ENCODE measurements at regions of chr9 and their contacts with region 1.

Region 1: GRCh38 chr9:129413537-129414376 is 207.1 kb downstream of the C9orf50 start:
- DNase-seq: peak; percentile 99
- H3K4me3 Mint-ChIP-seq: peak overlapping the region; percentile 82
- H3K27ac Mint-ChIP-seq: peak overlapping the region; percentile 93
- H3K4me1 Mint-ChIP-seq: peaks cover 14% of the 10 kb centered on the region
- H3K27me3 Mint-ChIP-seq: no peaks in the 10 kb centered on the region

Region 2: DNA sequence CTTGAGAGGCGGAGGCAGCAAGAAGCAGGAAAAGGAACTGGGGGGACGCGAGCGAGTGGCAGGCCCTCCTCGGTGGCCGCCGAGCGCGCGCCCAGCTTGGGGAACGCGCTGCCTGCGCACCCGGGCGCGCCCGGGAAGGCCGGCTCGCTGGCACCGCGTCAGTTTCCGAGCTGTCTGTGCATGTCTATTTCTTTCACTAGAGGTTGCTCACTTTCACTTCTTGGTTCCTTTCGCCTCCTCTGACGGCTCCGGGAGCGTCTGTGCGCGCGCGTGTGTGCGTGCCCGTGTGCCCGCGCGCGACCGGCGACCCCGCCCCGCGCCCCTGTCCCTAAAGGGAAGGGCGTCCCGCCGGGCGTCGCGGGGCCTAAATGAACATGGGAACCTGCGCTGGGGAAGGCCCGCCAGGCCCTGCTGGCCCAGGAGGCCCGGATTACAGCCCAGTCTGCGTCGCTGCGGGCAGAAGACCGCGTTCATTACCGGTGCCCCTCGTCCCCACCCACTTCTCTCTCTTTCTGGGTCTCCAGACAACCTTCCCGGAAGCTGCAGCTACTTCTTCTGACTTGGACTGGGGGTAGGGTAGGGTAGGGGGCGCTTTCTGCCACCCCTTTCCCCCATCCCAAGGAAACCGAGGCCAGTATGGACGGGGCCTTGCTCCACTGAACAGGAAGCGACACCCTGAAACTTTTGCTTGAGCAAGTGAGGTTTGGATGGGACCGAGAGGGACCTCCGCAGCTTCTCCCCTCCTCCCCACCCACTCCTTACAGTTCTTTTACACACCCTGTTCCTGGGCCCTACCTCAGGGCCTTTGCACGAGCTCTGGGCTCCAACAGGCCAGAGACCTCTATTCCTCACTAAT is 30.0 kb before region 1 on chr9:
- CTCF ChIA-PET with region 1: no interaction called
- intact Hi-C with region 1: loop called (anchors 1 kb)
- DNase-seq: peak; percentile 80
- H3K4me3 Mint-ChIP-seq: peak overlapping the region; percentile 69
- H3K27ac Mint-ChIP-seq: peak overlapping the region; percentile 66
- H3K4me1 Mint-ChIP-seq: peaks cover 10% of the 10 kb centered on the region
- H3K27me3 Mint-ChIP-seq: no peaks in the 10 kb centered on the region

Region 3: DNA sequence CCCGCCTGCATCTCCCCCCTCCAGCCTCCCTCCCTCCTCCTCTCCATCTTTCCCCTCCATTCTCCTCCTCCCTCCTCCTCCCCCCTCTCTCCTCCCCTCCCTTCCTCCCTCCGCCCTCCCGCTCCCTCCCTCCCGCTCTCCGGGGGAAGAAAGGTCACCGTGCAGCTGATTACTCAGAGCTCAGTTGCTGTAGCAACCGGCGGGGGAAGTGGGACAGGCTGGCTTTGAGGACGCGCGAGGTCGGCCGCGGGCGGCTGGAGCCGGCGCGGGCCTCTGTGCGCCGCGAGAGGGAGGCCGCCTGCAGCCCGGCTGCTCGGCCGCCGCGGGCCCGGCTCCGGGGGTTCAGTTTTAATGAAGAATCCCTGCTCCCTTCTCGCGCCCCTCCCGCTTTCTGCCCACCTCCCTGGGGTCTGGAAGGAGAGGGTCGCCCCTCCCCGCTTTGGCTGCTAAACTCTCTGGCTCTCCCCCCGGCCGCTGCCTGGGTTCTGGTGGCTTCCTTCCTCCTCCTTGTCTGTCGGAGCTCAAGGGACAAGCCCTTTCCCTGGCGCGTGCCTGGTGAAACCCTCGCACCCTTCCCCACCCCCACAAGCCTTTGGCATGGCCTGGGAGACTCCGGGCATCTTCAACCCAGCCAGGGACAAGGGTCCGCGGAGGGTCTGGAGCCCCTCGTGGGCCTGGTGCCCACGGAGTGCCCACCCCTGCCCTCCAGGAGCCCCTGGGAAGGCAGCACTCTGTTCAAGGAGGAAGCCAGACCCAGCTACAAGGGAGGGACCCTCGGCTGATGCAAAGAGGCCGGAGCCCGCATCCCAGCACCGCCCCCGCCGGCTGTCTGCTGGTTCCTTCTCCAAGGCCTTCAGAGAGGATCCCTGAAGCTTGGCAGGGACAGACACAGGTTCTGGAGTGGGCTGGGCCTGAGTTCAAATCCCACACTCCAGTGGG is 46.8 kb after region 1 on chr9:
- CTCF ChIA-PET with region 1: no interaction called
- intact Hi-C with region 1: loop called (anchors 1 kb)
- DNase-seq: peak; percentile 97
- H3K4me3 Mint-ChIP-seq: peak overlapping the region; percentile 78
- H3K27ac Mint-ChIP-seq: peak overlapping the region; percentile 85
- H3K4me1 Mint-ChIP-seq: peaks cover 24% of the 10 kb centered on the region
- H3K27me3 Mint-ChIP-seq: no peaks in the 10 kb centered on the region

Region 4: DNA sequence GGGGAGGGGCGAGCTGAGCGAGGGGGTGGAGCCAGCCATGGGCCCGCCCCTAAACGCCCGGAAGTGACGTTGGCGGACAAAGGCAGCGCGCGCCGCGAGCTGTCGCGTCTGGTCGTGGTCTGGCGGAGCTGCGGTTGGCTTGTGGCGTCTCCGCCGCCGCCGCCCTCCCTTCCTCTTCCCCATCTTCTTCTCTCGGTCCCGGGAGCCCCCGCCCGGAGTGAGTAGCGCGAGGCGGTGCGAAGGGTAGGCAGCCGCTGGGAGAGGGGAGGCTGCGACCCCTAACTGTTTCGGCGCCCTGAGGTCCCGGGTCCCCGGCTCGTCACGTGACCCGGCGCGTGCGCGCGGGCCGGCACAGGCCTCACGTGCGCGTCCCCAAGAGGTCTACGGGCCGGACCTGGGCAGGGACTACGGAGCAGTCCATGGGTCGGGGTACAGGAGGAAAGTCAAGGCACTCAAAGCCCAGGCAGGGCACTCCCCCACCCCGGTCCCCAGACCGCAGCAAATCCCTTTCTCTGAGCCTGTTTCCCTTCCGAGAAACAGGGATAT is 212.4 kb after region 1 on chr9 and contains the start of gene NTMT1:
- CTCF ChIA-PET with region 1: no interaction called
- intact Hi-C with region 1: loop called (anchors 1 kb)
- DNase-seq: peak; percentile 92
- H3K4me3 Mint-ChIP-seq: peak within 1 kb of the TSS; percentile 77
- H3K27ac Mint-ChIP-seq: peak within 1 kb of the TSS; percentile 93
- H3K4me1 Mint-ChIP-seq: peaks cover 59% of the 10 kb centered on the region
- H3K27me3 Mint-ChIP-seq: peaks cover 14% of the 10 kb centered on the region
- total RNA-seq, gene NTMT1: 58.6 to 59.3 TPM

Region 5: DNA sequence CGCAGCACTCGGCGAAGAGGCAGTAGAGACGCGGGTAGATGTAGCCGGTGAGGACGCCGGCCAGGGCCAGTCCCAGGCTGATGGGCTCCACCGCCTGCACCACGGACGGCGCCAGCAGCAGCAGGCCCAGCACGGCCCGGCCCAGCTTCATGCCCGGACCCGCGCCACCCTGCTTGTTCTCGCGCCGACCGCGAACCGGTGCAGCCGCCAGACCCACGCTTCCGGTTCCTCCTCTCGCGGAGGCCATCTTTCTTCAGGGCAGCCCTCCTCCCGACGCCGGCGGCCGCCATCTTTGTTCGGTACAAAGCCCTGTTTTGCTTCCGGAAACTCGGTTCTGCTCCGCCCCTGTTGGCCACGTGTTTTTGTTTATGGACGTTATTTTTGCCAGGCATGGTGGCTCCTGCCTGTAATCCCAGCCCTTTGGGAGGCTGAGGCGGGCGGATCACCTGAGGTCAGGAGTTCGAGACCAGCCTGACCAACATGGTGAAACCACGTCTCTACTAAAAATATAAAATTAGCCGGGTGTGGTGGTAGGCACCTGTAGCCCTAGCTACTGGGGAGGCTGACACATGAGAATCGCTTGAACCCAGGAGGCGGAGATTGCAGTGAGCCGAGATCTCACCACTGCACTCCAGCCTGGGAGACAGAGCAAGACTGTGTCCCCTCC is 410.3 kb after region 1 on chr9 and contains the start of gene TOR1A:
- CTCF ChIA-PET with region 1: no interaction called
- intact Hi-C with region 1: loop called (anchors 5 kb)
- DNase-seq: peak; percentile 96
- H3K4me3 Mint-ChIP-seq: peak within 1 kb of the TSS; percentile 79
- H3K27ac Mint-ChIP-seq: peak within 1 kb of the TSS; percentile 77
- H3K4me1 Mint-ChIP-seq: peaks cover 13% of the 10 kb centered on the region
- H3K27me3 Mint-ChIP-seq: no peaks in the 10 kb centered on the region
- total RNA-seq, gene TOR1A: 26.2 to 28.2 TPM

Measured in activated naive CD4-positive, alpha-beta T cell treated with anti-CD3 and anti-CD28 coated beads for 36 hours (primary cell).